Activated CD8-positive, alpha-beta memory T cell treated with anti-CD3 and anti-CD28 coated beads, Interleukin-2, amount 10 ng/mL, durations not matched to agents 7 days and 5 days (primary cell): ENCODE measurements at regions of chr21 and their contacts with region 1.

Region 1: DNA sequence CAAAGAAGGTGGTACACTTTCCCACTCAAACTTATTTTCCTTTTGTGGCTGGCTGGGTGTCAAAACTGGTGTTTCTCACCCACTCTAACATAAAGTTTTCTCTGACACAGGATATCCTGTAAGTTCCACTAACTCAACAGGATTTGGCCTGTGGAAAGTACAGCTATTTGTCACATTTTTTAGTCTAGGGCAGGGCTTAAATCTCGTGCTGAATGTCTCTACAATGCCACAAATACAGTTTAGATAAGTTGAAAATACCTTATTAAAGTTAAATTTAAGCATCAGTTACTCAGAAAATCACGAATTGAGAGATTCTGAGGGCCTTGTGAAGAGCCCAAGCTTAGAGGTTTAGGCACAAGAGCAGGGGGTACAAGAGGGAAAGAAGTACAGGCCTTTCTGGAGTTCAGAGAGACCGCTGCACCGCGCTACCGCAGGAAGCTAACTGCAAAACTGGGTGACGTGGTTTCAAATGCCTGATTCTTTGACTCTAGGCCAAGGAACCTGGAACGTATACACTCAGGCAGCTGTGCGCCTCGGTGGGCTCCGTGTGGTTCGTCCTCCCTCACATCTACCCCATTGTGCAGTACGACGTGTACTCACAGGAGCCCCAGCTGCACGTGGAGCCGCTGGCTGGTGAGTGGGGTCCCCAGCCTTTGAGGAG is 23.4 kb upstream of the PWP2 start:
- DNase-seq: peak; percentile 89
- ATAC-seq: peak; percentile 82
- H3K4me3 Mint-ChIP-seq: peak overlapping the region; percentile 74
- H3K27ac Mint-ChIP-seq: peak overlapping the region; percentile 97
- H3K4me1 Mint-ChIP-seq: peaks cover 87% of the 10 kb centered on the region
- H3K27me3 Mint-ChIP-seq: no peaks in the 10 kb centered on the region

Region 2: DNA sequence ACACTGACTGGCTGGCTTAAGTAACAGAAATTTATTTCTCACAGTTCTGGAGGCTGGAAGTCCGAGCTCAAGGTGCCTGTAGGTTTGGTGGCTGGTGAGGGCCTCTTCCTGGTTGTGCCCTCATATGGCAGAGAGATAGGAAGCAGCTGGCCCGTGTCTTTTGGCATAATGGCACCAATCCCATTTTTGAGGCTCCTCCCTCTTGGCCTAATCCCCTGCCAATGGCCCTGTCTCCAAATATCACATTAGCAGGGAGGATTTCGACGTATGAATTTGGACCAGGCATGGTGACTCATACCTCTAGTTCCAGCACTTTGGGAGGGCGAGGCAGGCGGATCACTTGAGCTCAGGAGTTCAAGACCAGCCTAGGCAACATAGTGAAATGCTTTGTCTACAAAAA is 181.3 kb before region 1 on chr21:
- CTCF ChIA-PET with region 1: no interaction called
- DNase-seq: no peak
- ATAC-seq: no peak
- H3K4me3 Mint-ChIP-seq: no peak overlapping the region
- H3K27ac Mint-ChIP-seq: no peak overlapping the region
- H3K4me1 Mint-ChIP-seq: no peaks in the 10 kb centered on the region
- H3K27me3 Mint-ChIP-seq: no peaks in the 10 kb centered on the region

Region 3: DNA sequence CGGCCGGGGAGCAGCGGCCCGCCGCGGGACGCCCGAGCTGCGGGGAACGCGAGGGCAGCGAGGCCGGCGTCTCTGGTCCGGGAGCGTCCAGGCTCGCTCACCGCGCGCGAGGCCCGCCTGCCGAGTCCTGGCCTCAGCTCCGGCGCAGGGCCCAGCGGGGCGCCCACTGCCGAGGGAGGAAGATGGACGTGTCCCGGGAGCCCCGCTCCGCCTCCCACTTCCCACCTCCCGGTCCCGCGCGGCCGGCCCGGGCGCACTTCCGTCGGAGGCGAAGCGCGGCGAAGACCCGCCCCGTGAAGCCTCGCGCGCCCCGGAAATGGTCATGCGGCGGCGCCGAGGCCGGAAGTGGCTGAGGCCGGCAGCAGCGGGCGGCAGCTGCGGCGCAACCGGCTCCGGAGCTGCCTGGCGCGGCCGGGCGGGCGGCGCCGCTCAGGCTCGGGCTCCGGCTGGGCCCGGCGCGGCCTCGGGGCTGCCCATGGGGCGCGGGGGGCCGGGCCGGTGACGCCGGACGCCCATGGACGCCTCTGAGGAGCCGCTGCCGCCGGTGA is 71.7 kb before region 1 on chr21 and contains the start of gene TRAPPC10:
- CTCF ChIA-PET with region 1: interaction called, 19 read pairs
- DNase-seq: peak; percentile 86
- ATAC-seq: peak; percentile 71
- H3K4me3 Mint-ChIP-seq: peak within 1 kb of the TSS; percentile 97
- H3K27ac Mint-ChIP-seq: peak within 1 kb of the TSS; percentile 89
- H3K4me1 Mint-ChIP-seq: peaks cover 47% of the 10 kb centered on the region
- H3K27me3 Mint-ChIP-seq: no peaks in the 10 kb centered on the region
- total RNA-seq, gene TRAPPC10: 71.5 to 71.7 TPM

Region 4: DNA sequence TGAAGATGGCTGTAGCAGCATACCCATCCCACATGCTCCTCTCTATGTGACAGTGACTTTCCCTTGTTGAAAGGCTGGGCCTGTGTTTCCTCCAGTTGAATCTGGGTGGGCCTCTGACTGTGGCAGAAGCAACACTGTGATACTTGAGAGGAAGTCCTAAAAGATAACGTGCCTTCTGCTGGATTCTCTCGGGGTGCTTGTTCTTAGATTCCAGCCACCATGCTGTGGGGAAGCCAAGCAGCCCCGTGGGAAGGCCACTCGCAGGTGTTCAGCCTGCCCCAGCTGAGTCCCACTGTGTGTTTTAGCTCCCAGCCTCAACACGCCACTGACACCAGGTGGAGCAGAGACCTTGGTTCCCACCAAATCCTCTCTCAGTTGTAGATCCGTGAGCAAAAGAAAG is 40.1 kb before region 1 on chr21:
- CTCF ChIA-PET with region 1: no interaction called
- DNase-seq: no peak
- ATAC-seq: no peak
- H3K4me3 Mint-ChIP-seq: no peak overlapping the region
- H3K27ac Mint-ChIP-seq: peak overlapping the region; percentile 33
- H3K4me1 Mint-ChIP-seq: peaks cover 30% of the 10 kb centered on the region
- H3K27me3 Mint-ChIP-seq: no peaks in the 10 kb centered on the region

Region 5: GRCh38 chr21:44065428-44065827 is 18.3 kb before region 1 on chr21:
- CTCF ChIA-PET with region 1: interaction called, 15 read pairs
- DNase-seq: peak; percentile 91
- ATAC-seq: peak; percentile 98
- H3K4me3 Mint-ChIP-seq: peak overlapping the region; percentile 69
- H3K27ac Mint-ChIP-seq: peak overlapping the region; percentile 97
- H3K4me1 Mint-ChIP-seq: peaks cover 31% of the 10 kb centered on the region
- H3K27me3 Mint-ChIP-seq: no peaks in the 10 kb centered on the region